CD8-positive, alpha-beta memory T cell (primary cell): ENCODE measurements at regions of chr10 and their contacts with region 1.

Region 1: GRCh38 chr10:24642622-24643417 is 80.9 kb downstream of the ARHGAP21 start:
- DNase-seq: peak in 2 of 5 donors; percentile 37 to 46
- H3K4me3 ChIP-seq: no peak overlapping the region
- H3K4me3 Mint-ChIP-seq: no peak overlapping the region
- H3K27ac ChIP-seq: no peak overlapping the region
- H3K27ac Mint-ChIP-seq: no peak overlapping the region
- H3K4me1 ChIP-seq: peaks cover 6% of the 10 kb centered on the region
- H3K4me1 Mint-ChIP-seq: peaks cover 0 to 1% (median 0%) of the 10 kb centered on the region in 3 donors
- H3K27me3 ChIP-seq: no peaks in the 10 kb centered on the region
- H3K27me3 Mint-ChIP-seq: no peaks in the 10 kb centered on the region

Region 2: DNA sequence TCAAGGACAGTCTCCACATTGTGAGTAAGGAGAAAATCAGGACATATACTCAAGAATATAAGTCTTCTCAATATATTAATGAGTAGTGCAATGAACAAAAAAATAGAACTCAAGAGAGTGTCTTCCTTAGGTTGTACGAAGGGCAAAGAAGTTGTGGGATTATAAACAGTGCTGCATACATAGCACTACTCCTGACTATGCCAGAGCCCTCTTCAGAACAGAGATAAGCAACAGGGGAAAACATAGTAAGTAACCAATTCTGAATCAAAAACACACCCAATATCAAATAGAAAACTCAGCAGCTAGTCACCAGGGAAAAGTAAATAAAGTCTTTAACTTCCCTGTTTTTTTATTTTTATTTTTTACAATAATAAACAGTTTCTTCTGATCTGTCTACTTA is 70.3 kb after region 1 on chr10:
- CTCF ChIA-PET with region 1: no interaction called
- POLR2A ChIA-PET with region 1: no interaction called
- DNase-seq: no peak
- H3K4me3 ChIP-seq: no peak overlapping the region
- H3K4me3 Mint-ChIP-seq: no peak overlapping the region
- H3K27ac ChIP-seq: no peak overlapping the region
- H3K27ac Mint-ChIP-seq: no peak overlapping the region
- H3K4me1 ChIP-seq: no peaks in the 10 kb centered on the region
- H3K4me1 Mint-ChIP-seq: peaks cover 0 to 5% (median 0%) of the 10 kb centered on the region in 3 donors
- H3K27me3 ChIP-seq: no peaks in the 10 kb centered on the region
- H3K27me3 Mint-ChIP-seq: peaks cover 0 to 1% of the 10 kb centered on the region in 2 donors

Region 3: GRCh38 chr10:24989867-24990266 is 347.0 kb after region 1 on chr10:
- CTCF ChIA-PET with region 1: interaction called, 10 read pairs
- POLR2A ChIA-PET with region 1: no interaction called
- DNase-seq: no peak
- H3K4me3 ChIP-seq: no peak overlapping the region
- H3K4me3 Mint-ChIP-seq: no peak overlapping the region
- H3K27ac ChIP-seq: no peak overlapping the region
- H3K27ac Mint-ChIP-seq: no peak overlapping the region
- H3K4me1 ChIP-seq: no peaks in the 10 kb centered on the region
- H3K4me1 Mint-ChIP-seq: no peaks in the 10 kb centered on the region
- H3K27me3 ChIP-seq: no peaks in the 10 kb centered on the region
- H3K27me3 Mint-ChIP-seq: peaks cover 0 to 2% of the 10 kb centered on the region in 2 donors

Region 4: DNA sequence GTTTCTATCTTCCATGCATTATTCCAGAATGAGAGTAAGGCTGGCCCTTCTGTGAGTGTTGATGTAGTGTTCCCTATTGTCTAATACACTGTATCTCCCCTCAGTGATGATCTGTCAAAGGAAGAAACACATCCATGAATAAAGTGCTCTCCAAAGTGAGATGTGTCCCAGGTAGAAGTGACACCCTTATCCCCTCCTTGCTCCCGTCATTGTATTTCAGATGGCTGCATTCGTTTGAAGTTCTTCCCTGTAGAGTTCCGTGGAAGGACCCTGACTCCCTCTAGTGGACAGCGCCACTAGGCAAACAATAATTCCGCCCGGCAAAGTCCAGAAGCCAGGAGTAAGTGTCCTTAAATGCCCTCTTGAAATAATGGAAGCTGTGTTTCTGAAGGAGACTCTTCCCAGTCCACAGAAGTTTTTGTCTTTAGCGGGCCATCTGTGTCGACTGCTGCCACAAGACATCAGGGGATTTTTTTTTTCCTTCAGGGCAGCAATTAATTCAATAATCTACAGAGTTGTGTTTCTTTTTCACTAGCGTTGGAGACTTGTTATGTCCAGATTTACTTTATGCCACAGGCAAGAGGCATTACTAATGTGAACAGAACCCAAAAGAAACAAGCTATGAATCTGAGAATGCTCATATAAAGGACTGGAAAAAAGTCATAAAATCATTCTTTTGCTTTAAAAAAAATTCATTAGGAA is 438.2 kb after region 1 on chr10:
- CTCF ChIA-PET with region 1: interaction called, 20 read pairs
- POLR2A ChIA-PET with region 1: interaction called, 7 read pairs
- DNase-seq: peak; percentile 32 to 68 (median 39)
- H3K4me3 ChIP-seq: no peak overlapping the region
- H3K4me3 Mint-ChIP-seq: no peak overlapping the region
- H3K27ac ChIP-seq: no peak overlapping the region
- H3K27ac Mint-ChIP-seq: peak overlapping the region in 2 of 8 donors; percentile 12 to 40
- H3K4me1 ChIP-seq: no peaks in the 10 kb centered on the region
- H3K4me1 Mint-ChIP-seq: peaks cover 4 to 14% (median 5%) of the 10 kb centered on the region in 3 donors
- H3K27me3 ChIP-seq: no peaks in the 10 kb centered on the region
- H3K27me3 Mint-ChIP-seq: peaks cover 2 to 26% of the 10 kb centered on the region in 2 donors